Activated T-helper 2 cell treated with anti-CD3 and anti-CD28 coated beads, Interferon-gamma antibody, Interleukin-2, Interleukin-4, amounts not matched to agents 10 μg/mL and 5 μg/mL and 100 μg/mL, durations not matched to agents 14 hours and 24 hours and 36 hours (primary cell): ENCODE measurements at regions of chr9 and their contacts with region 1.

Region 1: GRCh38 chr9:137086531-137087408 is at the start of gene MAN1B1:
- DNase-seq: peak; percentile 100
- H3K4me3 Mint-ChIP-seq: peak within 1 kb of the TSS; percentile 92
- H3K27ac Mint-ChIP-seq: peak within 1 kb of the TSS; percentile 88
- H3K4me1 Mint-ChIP-seq: peaks cover 34% of the 10 kb centered on the region
- H3K27me3 Mint-ChIP-seq: no peaks in the 10 kb centered on the region
- total RNA-seq, gene MAN1B1: 47.5 and 52.2 TPM in 2 replicates

Region 2: GRCh38 chr9:136455043-136456002 is 631.4 kb before region 1 on chr9:
- intact Hi-C with region 1: no loop called
- DNase-seq: no peak
- H3K4me3 Mint-ChIP-seq: no peak overlapping the region
- H3K27ac Mint-ChIP-seq: no peak overlapping the region
- H3K4me1 Mint-ChIP-seq: no peaks in the 10 kb centered on the region
- H3K27me3 Mint-ChIP-seq: no peaks in the 10 kb centered on the region

Region 3: DNA sequence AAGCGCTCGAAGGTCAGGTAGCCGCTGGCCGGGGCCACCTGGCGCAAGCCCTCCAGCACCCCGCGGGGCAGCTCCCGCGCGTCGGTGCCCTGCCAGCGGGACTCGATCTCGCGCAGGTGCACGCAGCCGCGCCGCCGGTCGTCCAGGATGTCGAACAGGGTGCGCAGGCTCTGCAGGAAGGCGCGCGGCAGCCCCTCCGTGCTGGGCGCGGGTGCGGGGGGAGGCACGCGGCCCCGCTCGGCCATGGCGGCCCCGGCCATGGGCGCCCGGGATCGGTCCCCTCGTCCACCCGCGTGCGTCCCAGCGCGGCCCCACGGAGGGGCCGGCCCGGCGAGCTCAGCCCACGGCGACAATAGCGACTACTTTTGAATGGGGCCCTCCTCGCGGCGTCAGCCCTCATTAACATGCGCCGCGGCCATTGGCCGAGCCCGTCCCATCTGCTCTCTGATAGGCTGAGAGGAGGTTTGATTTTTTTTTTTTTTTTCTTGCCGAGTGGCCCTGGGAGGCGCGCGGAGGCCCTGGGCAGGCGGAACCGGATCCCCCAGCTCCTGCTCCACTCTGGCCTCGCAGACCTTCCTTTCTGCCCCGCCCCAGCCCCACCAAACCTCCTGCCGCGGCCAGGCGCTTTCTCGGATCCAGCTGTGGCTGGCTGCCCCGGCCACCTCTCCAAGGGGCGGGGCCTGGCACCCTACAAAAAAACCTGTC is 16.4 kb before region 1 on chr9 and contains the start of gene SAPCD2:
- intact Hi-C with region 1: loop called (anchors 1 kb)
- DNase-seq: peak; percentile 87
- H3K4me3 Mint-ChIP-seq: peak within 1 kb of the TSS; percentile 83
- H3K27ac Mint-ChIP-seq: peak within 1 kb of the TSS; percentile 72
- H3K4me1 Mint-ChIP-seq: peaks cover 18% of the 10 kb centered on the region
- H3K27me3 Mint-ChIP-seq: no peaks in the 10 kb centered on the region
- total RNA-seq, gene SAPCD2: 26.5 and 27.1 TPM in 2 replicates

Region 4: DNA sequence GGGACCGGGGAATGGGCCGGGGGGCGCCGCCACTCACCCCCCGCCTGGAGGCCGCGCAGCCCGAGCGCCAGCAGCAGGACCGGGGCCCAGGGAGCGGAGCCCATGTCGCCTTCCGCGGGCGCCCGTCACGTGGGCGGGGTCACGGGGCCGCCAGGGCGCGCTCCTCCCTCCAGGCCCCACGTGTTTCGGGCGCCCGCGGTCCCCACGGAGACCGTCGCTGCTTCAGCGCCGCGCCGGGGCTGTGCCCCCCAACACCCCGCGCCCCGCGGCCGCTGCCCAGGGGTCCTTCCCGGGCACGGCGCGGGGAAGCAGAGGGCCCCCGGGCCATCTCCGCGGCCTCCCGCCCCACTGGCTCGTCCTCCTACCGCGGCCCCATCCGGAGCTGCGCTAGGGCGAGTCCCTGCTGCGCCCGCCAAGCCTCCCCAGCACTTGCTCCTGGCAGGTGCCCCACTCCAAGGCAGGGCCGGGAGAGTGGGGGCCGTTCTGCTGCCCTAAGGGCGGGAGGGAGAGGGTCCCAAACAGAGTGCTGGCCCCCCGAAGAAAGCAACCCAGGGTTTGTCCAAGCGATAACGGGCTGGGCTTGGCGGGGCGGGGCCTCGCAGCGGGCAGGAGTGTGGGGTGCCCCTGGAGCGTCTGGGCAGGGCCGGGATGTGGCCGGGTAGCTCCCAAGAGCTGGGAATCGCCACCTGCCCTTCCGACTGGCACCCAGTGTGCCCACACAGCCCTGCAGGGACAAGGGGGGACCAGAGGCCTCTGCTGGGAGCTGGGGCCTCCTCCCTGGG is 28.0 kb after region 1 on chr9 and contains the start of gene DPP7:
- intact Hi-C with region 1: loop called (anchors 2 kb)
- DNase-seq: peak; percentile 78
- H3K4me3 Mint-ChIP-seq: peak within 1 kb of the TSS; percentile 74
- H3K27ac Mint-ChIP-seq: peak within 1 kb of the TSS; percentile 60
- H3K4me1 Mint-ChIP-seq: peaks cover 5% of the 10 kb centered on the region
- H3K27me3 Mint-ChIP-seq: no peaks in the 10 kb centered on the region
- total RNA-seq, gene DPP7: 318 and 321 TPM in 2 replicates

Region 5: GRCh38 chr9:137176302-137177182 is 89.8 kb after region 1 on chr9:
- intact Hi-C with region 1: no loop called
- DNase-seq: no peak
- H3K4me3 Mint-ChIP-seq: no peak overlapping the region
- H3K27ac Mint-ChIP-seq: no peak overlapping the region
- H3K4me1 Mint-ChIP-seq: no peaks in the 10 kb centered on the region
- H3K27me3 Mint-ChIP-seq: peaks cover 5% of the 10 kb centered on the region